ENCODE measurements at regions of chr6 and their contacts with region 1.

Region 1: GRCh38 chr6:14129575-14129974 is 12.0 kb downstream of the CD83 start:
- DNase-seq: peak; percentile 65
- ATAC-seq: peak; percentile 91
- H3K4me3 ChIP-seq: no peak overlapping the region
- H3K27ac ChIP-seq: no peak overlapping the region
- H3K4me1 ChIP-seq: peaks cover 11% of the 10 kb centered on the region
- H3K27me3 ChIP-seq: no peaks in the 10 kb centered on the region
- CTCF ChIP-seq: peak; percentile 66

Region 2: DNA sequence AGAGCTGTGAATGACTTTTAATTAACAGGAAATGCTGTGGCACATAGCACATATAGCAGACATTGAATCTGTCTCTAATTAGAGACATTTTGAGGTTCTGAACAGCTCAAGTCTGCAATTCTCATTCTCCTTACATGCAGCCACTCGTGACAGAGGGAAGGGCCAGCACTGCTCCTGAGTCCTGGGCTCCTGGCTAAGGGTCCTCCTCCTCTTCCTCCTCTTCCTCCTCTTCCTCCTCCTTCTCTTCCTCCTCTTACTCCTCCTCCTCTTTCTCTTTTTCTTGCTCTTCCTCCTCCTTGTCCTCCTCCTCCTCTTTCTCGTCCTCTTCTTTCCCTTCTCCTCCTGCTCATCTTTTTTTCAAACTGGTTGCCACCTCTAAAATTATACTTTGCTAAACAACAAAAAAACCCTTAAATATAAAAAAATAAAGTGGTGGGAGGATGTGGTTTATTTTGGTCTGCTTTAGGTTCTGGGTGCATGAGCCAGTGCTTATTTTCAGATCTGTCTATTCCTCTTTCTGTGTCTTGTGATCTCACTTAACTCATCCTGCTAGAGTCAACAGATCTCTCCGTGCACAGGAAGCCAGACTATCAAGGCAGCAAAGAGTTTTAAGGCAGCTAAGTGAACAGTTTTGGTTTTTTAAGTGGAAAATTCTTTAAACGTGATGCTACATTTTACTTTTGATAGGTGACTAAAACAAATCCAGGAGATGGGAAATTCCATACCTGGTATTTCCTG is 147.3 kb after region 1 on chr6:
- CTCF ChIA-PET with region 1: no interaction called
- POLR2A ChIA-PET with region 1: no interaction called
- intact Hi-C with region 1: no loop called
- DNase-seq: no peak
- ATAC-seq: 0 out of 2 replicates have a peak, but pooled peaks have one; percentile 24
- H3K4me3 ChIP-seq: no peak overlapping the region
- H3K27ac ChIP-seq: no peak overlapping the region
- H3K4me1 ChIP-seq: peaks cover 36% of the 10 kb centered on the region
- H3K27me3 ChIP-seq: no peaks in the 10 kb centered on the region
- CTCF ChIP-seq: no peak

Region 3: GRCh38 chr6:15621203-15622044 is 1491.8 kb after region 1 on chr6:
- CTCF ChIA-PET with region 1: no interaction called
- POLR2A ChIA-PET with region 1: interaction called, 15 read pairs
- intact Hi-C with region 1: no loop called
- DNase-seq: no peak
- ATAC-seq: no peak
- H3K4me3 ChIP-seq: no peak overlapping the region
- H3K27ac ChIP-seq: no peak overlapping the region
- H3K4me1 ChIP-seq: no peaks in the 10 kb centered on the region
- H3K27me3 ChIP-seq: no peaks in the 10 kb centered on the region
- CTCF ChIP-seq: no peak